ENCODE measurements at regions of chr12 and their contacts with region 1.

Region 1: GRCh38 chr12:63151623-63152320 is 771 bp upstream of the AVPR1A start:
- DNase-seq: peak; percentile 68
- H3K4me3 Mint-ChIP-seq: peak overlapping the region; percentile 81
- H3K27ac Mint-ChIP-seq: peak overlapping the region; percentile 4
- H3K4me1 Mint-ChIP-seq: peaks cover 8% of the 10 kb centered on the region
- H3K27me3 Mint-ChIP-seq: no peaks in the 10 kb centered on the region
- CTCF ChIP-seq: peak; percentile 85

Region 2: GRCh38 chr12:63196168-63196567 is 44.4 kb after region 1 on chr12:
- CTCF ChIA-PET with region 1: no interaction called
- intact Hi-C with region 1: no loop called
- DNase-seq: peak; percentile 15
- H3K4me3 Mint-ChIP-seq: no peak overlapping the region
- H3K27ac Mint-ChIP-seq: no peak overlapping the region
- H3K4me1 Mint-ChIP-seq: peaks cover 11% of the 10 kb centered on the region
- H3K27me3 Mint-ChIP-seq: peaks cover 13% of the 10 kb centered on the region
- CTCF ChIP-seq: no peak

Region 3: DNA sequence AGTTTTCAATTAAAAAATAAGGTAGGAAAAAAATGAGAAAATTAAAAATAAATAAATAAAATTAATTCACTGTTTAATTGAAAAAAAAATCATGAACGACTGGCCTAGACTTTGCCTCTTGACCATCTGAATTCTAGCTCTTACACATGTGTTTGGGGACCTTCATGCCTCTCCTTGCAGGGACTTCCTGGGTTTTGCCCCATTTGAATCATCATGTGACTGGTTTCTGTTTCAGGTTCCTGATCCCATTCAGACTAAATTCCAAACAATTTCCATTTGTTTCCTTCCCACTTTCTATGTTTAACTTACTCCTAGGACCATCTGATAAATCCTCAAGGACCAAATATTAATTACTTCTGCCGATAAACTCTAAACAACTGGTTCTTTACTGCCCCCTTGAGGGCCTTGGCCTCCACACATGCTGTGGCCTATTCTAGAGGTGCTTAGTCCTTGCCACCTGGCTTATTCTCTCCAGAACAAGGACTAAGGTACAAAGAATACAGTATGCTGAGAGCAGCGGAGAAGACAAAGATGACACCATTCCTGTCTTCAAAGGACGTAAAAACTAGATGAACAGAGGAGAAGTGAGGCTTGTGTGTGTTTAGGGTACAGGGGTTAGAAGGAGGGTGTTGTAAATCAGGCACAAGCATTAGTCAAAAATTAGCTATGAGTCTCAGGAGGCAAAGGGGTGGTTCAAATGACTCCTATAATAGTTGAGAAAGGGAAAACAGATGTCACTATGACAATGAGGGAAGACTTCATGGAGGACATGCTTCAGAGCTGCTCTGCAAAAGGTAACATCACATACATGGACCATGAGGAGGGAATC is 125.0 kb after region 1 on chr12:
- CTCF ChIA-PET with region 1: interaction called, 20 read pairs
- intact Hi-C with region 1: loop called (anchors 1 kb)
- DNase-seq: peak; percentile 78
- H3K4me3 Mint-ChIP-seq: no peak overlapping the region
- H3K27ac Mint-ChIP-seq: no peak overlapping the region
- H3K4me1 Mint-ChIP-seq: peaks cover 8% of the 10 kb centered on the region
- H3K27me3 Mint-ChIP-seq: no peaks in the 10 kb centered on the region
- CTCF ChIP-seq: peak; percentile 61

Measured in Calu3 (cell line).